Activated CD4-positive, alpha-beta memory T cell treated with anti-CD3 and anti-CD28 coated beads, Interleukin-2, amount 10 ng/mL, durations not matched to agents 7 days and 5 days (primary cell): ENCODE measurements at regions of chr22 and their contacts with region 1.

Region 1: DNA sequence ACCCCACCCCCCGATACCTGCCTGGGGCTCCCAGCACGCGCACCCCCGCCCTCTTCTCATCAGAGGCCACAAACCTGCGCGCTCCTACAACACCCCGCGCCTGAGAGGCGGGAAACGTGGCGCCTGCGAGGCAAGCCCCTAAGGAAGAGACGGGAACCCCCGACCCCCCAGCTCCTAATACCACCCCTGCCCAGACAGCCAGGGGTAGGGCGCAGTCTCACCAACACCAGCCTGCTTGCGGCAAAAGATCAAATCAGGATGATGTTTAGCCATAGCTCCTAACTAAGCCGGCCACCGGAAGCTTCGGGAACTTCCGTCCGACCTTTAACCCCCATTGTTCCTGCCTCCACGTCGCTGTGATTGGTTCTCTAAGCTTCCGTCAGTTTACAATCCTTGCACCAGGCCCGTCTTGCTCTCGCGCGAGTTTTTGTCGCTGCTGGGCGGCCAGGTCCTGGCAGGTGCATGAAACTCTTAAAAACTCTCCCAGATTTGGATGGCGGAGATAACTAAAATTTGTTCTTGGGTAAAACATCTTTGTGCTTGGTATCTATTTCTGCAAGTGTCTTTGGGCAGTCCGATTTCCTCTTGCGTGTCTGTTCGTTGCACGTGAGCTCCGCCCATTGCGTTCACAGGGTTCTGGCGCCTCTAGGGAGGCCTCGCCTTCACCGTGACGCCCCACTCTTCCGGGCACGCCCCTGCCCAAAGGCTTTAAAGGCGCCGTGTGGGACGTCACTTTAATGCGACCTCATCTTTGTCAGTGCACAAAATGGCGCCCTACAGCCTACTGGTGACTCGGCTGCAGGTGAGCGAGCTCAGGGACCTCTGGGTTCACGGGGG is at the starts of genes ACO2 and PHF5A:
- DNase-seq: peak; percentile 98
- H3K4me3 Mint-ChIP-seq: peak within 1 kb of the TSS; percentile 77
- H3K27ac Mint-ChIP-seq: peak within 1 kb of the TSS; percentile 96
- H3K4me1 Mint-ChIP-seq: peaks cover 58% of the 10 kb centered on the region
- H3K27me3 Mint-ChIP-seq: no peaks in the 10 kb centered on the region
- total RNA-seq, gene ACO2: 69.9 to 72.2 TPM
- total RNA-seq, gene PHF5A: 43.9 to 55.3 TPM

Region 2: GRCh38 chr22:41381329-41382097 is 87.1 kb before region 1 on chr22 and contains the start of gene TEF:
- CTCF ChIA-PET with region 1: interaction called, 5 read pairs
- POLR2A ChIA-PET with region 1: interaction called, 23 read pairs
- DNase-seq: peak; percentile 98
- H3K4me3 Mint-ChIP-seq: peak within 1 kb of the TSS; percentile 88
- H3K27ac Mint-ChIP-seq: peak within 1 kb of the TSS; percentile 89
- H3K4me1 Mint-ChIP-seq: peaks cover 15% of the 10 kb centered on the region
- H3K27me3 Mint-ChIP-seq: peaks cover under 1% of the 10 kb centered on the region
- total RNA-seq, gene TEF: 2.3 to 3.3 TPM

Region 3: GRCh38 chr22:41417622-41418390 is 50.8 kb before region 1 on chr22:
- CTCF ChIA-PET with region 1: interaction called, 3 read pairs
- POLR2A ChIA-PET with region 1: interaction called, 20 read pairs
- DNase-seq: no peak
- H3K4me3 Mint-ChIP-seq: no peak overlapping the region
- H3K27ac Mint-ChIP-seq: no peak overlapping the region
- H3K4me1 Mint-ChIP-seq: peaks cover 15% of the 10 kb centered on the region
- H3K27me3 Mint-ChIP-seq: no peaks in the 10 kb centered on the region

Region 4: GRCh38 chr22:41448189-41448808 is 20.3 kb before region 1 on chr22:
- CTCF ChIA-PET with region 1: interaction called, 11 read pairs
- POLR2A ChIA-PET with region 1: interaction called, 136 read pairs
- DNase-seq: peak; percentile 94
- H3K4me3 Mint-ChIP-seq: peak overlapping the region; percentile 95
- H3K27ac Mint-ChIP-seq: peak overlapping the region; percentile 93
- H3K4me1 Mint-ChIP-seq: peaks cover 22% of the 10 kb centered on the region
- H3K27me3 Mint-ChIP-seq: no peaks in the 10 kb centered on the region

Region 5: DNA sequence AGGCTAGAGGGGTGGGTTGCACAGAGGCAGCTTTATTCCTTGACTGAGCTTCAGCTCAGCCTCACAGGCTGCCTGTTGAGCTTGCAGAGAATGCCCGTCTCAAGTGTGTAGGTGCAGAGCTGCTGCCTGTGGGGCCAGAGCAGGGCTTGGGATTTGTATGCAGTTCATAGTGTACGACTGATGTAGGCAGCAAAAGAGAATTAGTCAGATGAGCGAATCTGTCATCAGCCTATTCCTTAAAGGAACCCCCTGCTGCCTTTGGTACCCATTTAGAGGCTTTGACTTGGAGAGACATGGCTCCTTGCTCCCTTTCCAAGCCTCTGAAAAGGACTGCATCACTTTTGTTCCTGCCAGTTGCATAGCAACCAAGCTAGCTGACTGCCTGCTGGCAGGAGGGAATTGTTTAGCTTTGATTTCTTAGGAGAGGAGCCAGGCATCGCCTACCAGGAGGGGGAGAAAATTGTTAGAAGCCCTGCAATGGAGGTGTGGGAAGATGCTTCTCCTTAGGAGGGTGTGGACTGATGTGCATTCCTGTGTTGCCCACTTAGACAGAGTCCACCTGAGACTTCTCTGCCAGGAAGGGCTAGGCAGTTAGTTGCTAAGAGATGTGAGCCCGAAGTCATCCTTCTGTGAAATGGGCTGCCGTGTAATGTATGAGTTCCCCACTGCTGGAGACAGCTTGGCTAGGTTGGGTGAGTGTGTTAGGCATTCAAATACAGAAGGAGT is 11.2 kb after region 1 on chr22:
- CTCF ChIA-PET with region 1: interaction called, 3 read pairs
- POLR2A ChIA-PET with region 1: interaction called, 29 read pairs
- DNase-seq: no peak
- H3K4me3 Mint-ChIP-seq: no peak overlapping the region
- H3K27ac Mint-ChIP-seq: no peak overlapping the region
- H3K4me1 Mint-ChIP-seq: peaks cover 9% of the 10 kb centered on the region
- H3K27me3 Mint-ChIP-seq: no peaks in the 10 kb centered on the region